Mammary epithelial cell (primary cell): ENCODE measurements at regions of chr7 and their contacts with region 1.

Region 1: DNA sequence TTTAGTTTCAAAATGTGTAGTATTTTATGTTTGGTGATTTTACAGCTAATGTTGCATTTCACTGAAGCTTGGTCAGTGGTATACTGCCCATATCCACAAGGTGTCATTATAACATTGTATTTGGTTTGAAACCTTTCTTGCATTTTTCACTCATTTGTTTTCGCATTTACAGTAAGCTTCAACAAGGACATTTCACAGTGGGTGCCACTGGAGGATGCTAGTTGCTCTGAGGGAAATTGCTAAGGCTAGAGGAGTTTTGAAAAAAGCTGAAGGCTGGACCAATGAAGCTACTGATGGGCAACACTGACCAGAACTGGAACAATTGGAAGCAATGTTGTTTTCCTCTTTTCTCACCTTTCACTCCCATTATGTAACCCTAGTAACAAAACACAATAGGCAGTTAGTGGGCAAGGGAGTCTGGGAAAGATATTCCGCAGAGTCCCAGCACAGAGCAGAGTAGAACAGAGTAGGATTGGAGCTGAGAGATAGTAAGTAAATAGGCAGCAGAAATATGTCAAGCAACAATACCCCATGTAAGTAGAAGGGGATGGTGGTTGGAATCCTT is 23.6 kb upstream of the SRI start:
- DNase-seq: peak; percentile 81
- H3K4me3 ChIP-seq: no peak overlapping the region
- H3K27ac ChIP-seq: no peak overlapping the region
- H3K4me1 ChIP-seq: no peaks in the 10 kb centered on the region
- H3K27me3 ChIP-seq: no peaks in the 10 kb centered on the region
- CTCF ChIP-seq: peak; percentile 83 to 97

Region 2: GRCh38 chr7:87984088-87984487 is 259.3 kb before region 1 on chr7:
- CTCF ChIA-PET with region 1: no interaction called
- dilution Hi-C with region 1: no loop called
- in situ Hi-C with region 1: no loop called
- intact Hi-C with region 1: no loop called
- DNase-seq: no peak
- H3K4me3 ChIP-seq: no peak overlapping the region
- H3K27ac ChIP-seq: no peak overlapping the region
- H3K4me1 ChIP-seq: no peaks in the 10 kb centered on the region
- H3K27me3 ChIP-seq: no peaks in the 10 kb centered on the region
- CTCF ChIP-seq: no peak

Region 3: GRCh38 chr7:88083883-88084282 is 159.5 kb before region 1 on chr7:
- CTCF ChIA-PET with region 1: no interaction called
- dilution Hi-C with region 1: no loop called
- in situ Hi-C with region 1: no loop called
- intact Hi-C with region 1: no loop called
- DNase-seq: no peak
- H3K4me3 ChIP-seq: no peak overlapping the region
- H3K27ac ChIP-seq: no peak overlapping the region
- H3K4me1 ChIP-seq: no peaks in the 10 kb centered on the region
- H3K27me3 ChIP-seq: no peaks in the 10 kb centered on the region
- CTCF ChIP-seq: no peak

Region 4: GRCh38 chr7:88350118-88350517 is 106.7 kb after region 1 on chr7:
- CTCF ChIA-PET with region 1: interaction called, 4 read pairs
- dilution Hi-C with region 1: no loop called
- in situ Hi-C with region 1: loop called (anchors 5 kb)
- intact Hi-C with region 1: no loop called
- DNase-seq: no peak
- H3K4me3 ChIP-seq: no peak overlapping the region
- H3K27ac ChIP-seq: no peak overlapping the region
- H3K4me1 ChIP-seq: peaks cover 2% of the 10 kb centered on the region
- H3K27me3 ChIP-seq: no peaks in the 10 kb centered on the region
- CTCF ChIP-seq: no peak

Region 5: GRCh38 chr7:88357781-88358525 is 114.5 kb after region 1 on chr7:
- CTCF ChIA-PET with region 1: interaction called, 21 read pairs
- dilution Hi-C with region 1: no loop called
- in situ Hi-C with region 1: loop called (anchors 5 kb)
- intact Hi-C with region 1: loop called (anchors 1 kb)
- DNase-seq: peak; percentile 36
- H3K4me3 ChIP-seq: peak overlapping the region in 2 of 3 experiments; percentile 6 to 18
- H3K27ac ChIP-seq: peak overlapping the region; percentile 25
- H3K4me1 ChIP-seq: peaks cover 6% of the 10 kb centered on the region
- H3K27me3 ChIP-seq: no peaks in the 10 kb centered on the region
- CTCF ChIP-seq: peak; percentile 72 to 82

Region 6: GRCh38 chr7:89622838-89623672 is 1379.6 kb after region 1 on chr7:
- CTCF ChIA-PET with region 1: no interaction called
- dilution Hi-C with region 1: no loop called
- in situ Hi-C with region 1: no loop called
- intact Hi-C with region 1: loop called (anchors 5 kb)
- DNase-seq: peak; percentile 35
- H3K4me3 ChIP-seq: no peak overlapping the region
- H3K27ac ChIP-seq: no peak overlapping the region
- H3K4me1 ChIP-seq: no peaks in the 10 kb centered on the region
- H3K27me3 ChIP-seq: no peaks in the 10 kb centered on the region
- CTCF ChIP-seq: peak; percentile 73 to 82